K562 (cell line): ENCODE measurements at regions of chr13 and their contacts with region 1.

Region 1: DNA sequence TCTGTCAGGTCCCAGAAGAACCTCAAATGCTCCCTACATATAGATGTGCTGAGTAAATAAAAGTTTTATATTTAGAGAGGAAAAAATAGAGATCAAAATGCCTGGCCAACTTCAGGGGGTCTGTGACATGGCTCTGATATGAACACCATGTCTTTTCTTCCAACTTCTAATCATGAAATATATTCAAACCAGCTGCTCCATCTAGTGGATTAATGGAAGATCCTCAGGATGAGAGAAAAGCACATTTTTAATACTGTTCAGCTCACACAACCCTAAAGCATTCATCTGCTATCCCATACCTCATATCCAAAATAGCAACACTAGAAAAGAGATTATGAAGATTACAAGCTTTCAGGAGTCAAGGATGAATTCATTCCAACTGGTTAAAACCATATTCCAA is 56.0 kb upstream of the DOCK9 start:
- DNase-seq: no peak
- ATAC-seq: peak; percentile 82
- H3K4me3 ChIP-seq: no peak overlapping the region
- H3K27ac ChIP-seq: no peak overlapping the region
- H3K4me1 ChIP-seq: no peaks in the 10 kb centered on the region; a peak in 1 of 5 replicates
- H3K27me3 ChIP-seq: no peaks in the 10 kb centered on the region
- CTCF ChIP-seq: peak; percentile 43 to 63 (median 44); a peak in 3 of 6 replicates
- EP300 ChIP-seq: no peak
- POLR2A ChIP-seq: no peak
- RAD21 ChIP-seq: peak; percentile 70 to 71

Region 2: GRCh38 chr13:98842864-98843481 is 190.8 kb before region 1 on chr13:
- CTCF ChIA-PET with region 1: no interaction called
- POLR2A ChIA-PET with region 1: no interaction called
- in situ Hi-C with region 1: no loop called
- intact Hi-C with region 1: loop called (anchors 2 kb)
- DNase-seq: peak; percentile 48 to 71 (median 56)
- ATAC-seq: peak; percentile 90
- H3K4me3 ChIP-seq: no peak overlapping the region
- H3K27ac ChIP-seq: no peak overlapping the region
- H3K4me1 ChIP-seq: peaks cover 0 to 4% of the 10 kb centered on the region in 2 experiments; a peak in 1 of 5 replicates
- H3K27me3 ChIP-seq: no peaks in the 10 kb centered on the region
- CTCF ChIP-seq: peak; percentile 67 to 82 (median 77)
- EP300 ChIP-seq: no peak
- POLR2A ChIP-seq: no peak
- RAD21 ChIP-seq: peak; percentile 57 to 64

Region 3: GRCh38 chr13:98890186-98890585 is 143.6 kb before region 1 on chr13:
- CTCF ChIA-PET with region 1: interaction called, 4 read pairs
- POLR2A ChIA-PET with region 1: no interaction called
- in situ Hi-C with region 1: no loop called
- intact Hi-C with region 1: loop called (anchors 10 kb)
- DNase-seq: no peak
- ATAC-seq: no peak
- H3K4me3 ChIP-seq: no peak overlapping the region
- H3K27ac ChIP-seq: no peak overlapping the region
- H3K4me1 ChIP-seq: no peaks in the 10 kb centered on the region
- H3K27me3 ChIP-seq: no peaks in the 10 kb centered on the region
- CTCF ChIP-seq: no peak
- EP300 ChIP-seq: no peak
- POLR2A ChIP-seq: no peak
- RAD21 ChIP-seq: no peak

Region 4: GRCh38 chr13:99078017-99078771 is 44.4 kb after region 1 on chr13:
- CTCF ChIA-PET with region 1: no interaction called
- POLR2A ChIA-PET with region 1: no interaction called
- in situ Hi-C with region 1: no loop called
- intact Hi-C with region 1: loop called (anchors 2 kb)
- DNase-seq: peak in 3 of 4 experiments; percentile 17 to 69 (median 59)
- ATAC-seq: peak; percentile 85
- H3K4me3 ChIP-seq: no peak overlapping the region
- H3K27ac ChIP-seq: peak overlapping the region; percentile 50
- H3K4me1 ChIP-seq: peaks cover 9 to 20% of the 10 kb centered on the region in 2 experiments; a peak in 3 of 5 replicates
- H3K27me3 ChIP-seq: no peaks in the 10 kb centered on the region
- CTCF ChIP-seq: peak in 2 of 3 experiments; percentile 5 to 42; a peak in 3 of 6 replicates
- EP300 ChIP-seq: no peak
- POLR2A ChIP-seq: no peak
- RAD21 ChIP-seq: peak in 1 of 2 experiments; percentile 37